ENCODE measurements at regions of chr1 and their contacts with region 1.

Region 1: DNA sequence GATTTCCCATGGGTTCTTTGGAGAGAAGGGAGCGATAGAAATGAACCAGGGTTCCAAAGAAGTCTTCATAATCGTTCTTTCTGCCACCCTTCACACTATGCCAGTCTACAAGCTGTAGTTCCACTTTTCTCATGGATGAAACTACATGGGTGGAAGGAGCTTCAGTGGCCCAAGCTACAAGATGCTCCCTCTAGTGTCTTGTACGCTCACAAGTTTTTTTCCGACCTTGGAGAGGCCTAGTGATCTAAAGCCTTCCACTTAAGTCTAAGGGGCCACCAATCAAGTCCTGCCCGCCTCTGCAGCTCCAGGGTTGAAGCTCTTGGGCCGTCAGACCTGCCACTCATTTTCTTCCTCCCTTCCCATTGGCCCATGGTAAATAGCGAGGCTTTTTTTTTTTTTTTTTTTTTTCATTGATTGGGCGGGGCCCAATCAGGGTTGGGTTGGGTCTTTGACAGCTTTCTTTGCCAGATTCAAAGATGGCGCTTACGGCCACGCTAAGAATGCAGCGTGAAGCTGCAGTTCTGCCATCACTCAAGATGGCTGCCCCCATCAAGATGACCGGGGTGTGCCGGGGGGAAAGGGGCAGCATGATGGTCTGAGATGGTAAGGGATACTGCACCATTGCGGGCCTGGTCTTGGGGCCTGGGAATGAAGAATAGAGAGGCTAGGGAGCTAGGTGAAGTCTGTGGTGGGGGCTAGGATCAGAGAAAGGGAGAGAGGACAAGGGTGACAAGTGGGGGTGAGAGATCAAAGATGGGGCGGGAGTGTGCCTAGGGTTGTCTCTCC is at the start of gene TOMM40L:
- DNase-seq: peak; percentile 99
- H3K4me3 ChIP-seq: peak within 1 kb of the TSS; percentile 95
- CTCF ChIP-seq: peak; percentile 77

Region 2: GRCh38 chr1:161177112-161177935 is 48.4 kb before region 1 on chr1 and contains the start of gene B4GALT3:
- CTCF ChIA-PET with region 1: interaction called, 24 read pairs
- POLR2A ChIA-PET with region 1: no interaction called
- DNase-seq: no peak
- H3K4me3 ChIP-seq: peak within 1 kb of the TSS; percentile 99
- CTCF ChIP-seq: no peak

Region 3: GRCh38 chr1:161250829-161251228 is 25.1 kb after region 1 on chr1:
- CTCF ChIA-PET with region 1: interaction called, 43 read pairs
- POLR2A ChIA-PET with region 1: no interaction called
- DNase-seq: no peak
- H3K4me3 ChIP-seq: no peak overlapping the region
- CTCF ChIP-seq: no peak

Region 4: DNA sequence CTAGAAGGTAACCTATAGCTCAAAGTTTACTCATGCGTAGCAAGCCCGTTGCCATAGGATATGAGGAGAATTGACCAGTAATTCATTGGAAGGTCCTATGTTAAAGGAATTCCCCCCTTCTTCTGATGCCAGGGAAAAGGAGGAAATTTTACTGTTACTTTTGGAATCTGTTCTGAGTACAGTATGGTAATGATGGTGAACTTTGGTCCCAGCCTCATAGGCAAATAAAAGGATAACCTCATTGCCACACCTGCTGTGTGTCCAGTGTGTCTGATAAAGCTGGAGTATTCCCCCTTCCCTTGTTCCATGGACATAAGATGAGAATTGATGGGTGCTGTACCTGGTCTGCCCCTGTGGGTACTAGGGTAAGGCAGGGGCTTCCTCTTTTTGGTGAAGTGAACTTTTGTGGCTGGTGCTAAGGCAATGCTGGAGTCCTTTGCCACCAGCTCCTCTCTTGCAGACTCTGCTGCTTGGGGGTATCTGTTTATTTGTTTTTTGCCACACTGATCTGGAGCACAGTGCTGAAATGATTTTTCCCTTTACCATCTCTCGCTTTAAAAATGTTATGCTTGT is 61.8 kb after region 1 on chr1:
- CTCF ChIA-PET with region 1: interaction called, 191 read pairs
- POLR2A ChIA-PET with region 1: no interaction called
- DNase-seq: no peak
- H3K4me3 ChIP-seq: no peak overlapping the region
- CTCF ChIP-seq: no peak

Region 5: DNA sequence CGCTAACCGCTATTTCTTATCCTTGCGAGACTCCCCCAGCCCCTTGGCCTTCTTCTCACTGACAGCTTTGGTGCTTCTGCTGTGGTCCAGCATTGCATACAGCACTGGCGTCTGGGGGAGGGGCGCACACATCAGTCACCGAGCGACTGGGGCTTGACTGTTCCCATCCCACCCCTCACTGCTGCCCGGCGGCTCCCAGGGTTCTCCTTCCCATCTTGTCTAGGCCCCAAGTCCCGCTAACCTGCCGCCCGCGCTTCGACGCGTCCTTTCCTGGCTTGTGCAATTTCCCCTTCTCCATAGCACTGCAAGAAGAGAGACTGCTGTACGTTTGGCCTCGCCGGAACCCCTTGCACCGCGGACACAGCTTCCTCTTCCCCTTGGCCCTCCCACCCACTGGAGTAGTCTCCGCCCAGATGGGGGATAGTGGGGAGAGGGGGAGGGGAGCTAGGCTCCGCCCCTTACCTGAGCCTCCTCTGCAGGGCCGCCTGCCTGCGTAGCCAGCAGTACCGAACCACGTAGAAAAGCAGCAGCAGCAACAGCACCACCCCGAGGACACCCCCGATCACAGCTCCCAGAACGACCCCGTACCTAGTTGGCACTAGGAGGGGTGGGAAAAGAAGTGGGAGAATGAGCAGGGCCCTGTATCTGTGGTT is 80.3 kb after region 1 on chr1:
- CTCF ChIA-PET with region 1: interaction called, 11 read pairs
- POLR2A ChIA-PET with region 1: no interaction called
- DNase-seq: no peak
- H3K4me3 ChIP-seq: peak overlapping the region; percentile 74
- CTCF ChIP-seq: peak; percentile 14

Region 6: DNA sequence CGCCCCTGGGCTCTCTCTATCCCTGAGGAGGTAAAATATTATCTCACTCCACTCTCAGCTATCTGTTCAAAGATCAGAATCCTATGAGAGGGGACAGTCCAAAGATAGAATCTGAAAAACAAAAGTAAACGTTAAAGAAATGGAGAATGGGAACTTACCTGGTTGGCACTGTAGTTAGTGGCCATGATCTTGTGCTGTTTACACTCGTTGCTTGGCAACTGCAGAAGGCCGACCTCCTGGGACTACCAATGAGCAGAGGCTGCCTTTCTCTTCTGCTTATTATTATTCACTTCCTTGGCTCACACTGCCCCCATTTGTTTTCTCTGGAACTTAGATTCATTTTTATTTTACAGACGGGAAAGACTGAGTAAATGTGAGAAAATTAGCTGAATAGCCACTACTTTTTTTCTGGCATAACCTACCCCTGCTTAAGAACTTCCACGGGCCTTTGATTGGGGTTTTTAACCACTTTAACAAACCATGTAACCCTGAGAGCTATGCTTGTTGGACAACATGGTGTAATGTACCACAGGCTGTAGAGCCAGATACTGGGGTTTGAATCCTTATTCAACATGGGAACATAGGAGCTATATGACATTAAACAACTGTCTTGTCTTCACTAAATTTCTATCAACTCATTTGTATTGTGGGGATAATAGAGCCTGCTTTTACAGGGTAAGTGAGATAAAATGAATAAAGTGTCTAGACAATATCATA is 142.1 kb after region 1 on chr1 and contains the start of gene CFAP126:
- CTCF ChIA-PET with region 1: interaction called, 32 read pairs
- POLR2A ChIA-PET with region 1: no interaction called
- DNase-seq: peak; percentile 24
- H3K4me3 ChIP-seq: no peak within 1 kb of the TSS
- CTCF ChIP-seq: no peak